IMR-90 (cell line): ENCODE measurements at regions of chr4 and their contacts with region 1.

Region 1: DNA sequence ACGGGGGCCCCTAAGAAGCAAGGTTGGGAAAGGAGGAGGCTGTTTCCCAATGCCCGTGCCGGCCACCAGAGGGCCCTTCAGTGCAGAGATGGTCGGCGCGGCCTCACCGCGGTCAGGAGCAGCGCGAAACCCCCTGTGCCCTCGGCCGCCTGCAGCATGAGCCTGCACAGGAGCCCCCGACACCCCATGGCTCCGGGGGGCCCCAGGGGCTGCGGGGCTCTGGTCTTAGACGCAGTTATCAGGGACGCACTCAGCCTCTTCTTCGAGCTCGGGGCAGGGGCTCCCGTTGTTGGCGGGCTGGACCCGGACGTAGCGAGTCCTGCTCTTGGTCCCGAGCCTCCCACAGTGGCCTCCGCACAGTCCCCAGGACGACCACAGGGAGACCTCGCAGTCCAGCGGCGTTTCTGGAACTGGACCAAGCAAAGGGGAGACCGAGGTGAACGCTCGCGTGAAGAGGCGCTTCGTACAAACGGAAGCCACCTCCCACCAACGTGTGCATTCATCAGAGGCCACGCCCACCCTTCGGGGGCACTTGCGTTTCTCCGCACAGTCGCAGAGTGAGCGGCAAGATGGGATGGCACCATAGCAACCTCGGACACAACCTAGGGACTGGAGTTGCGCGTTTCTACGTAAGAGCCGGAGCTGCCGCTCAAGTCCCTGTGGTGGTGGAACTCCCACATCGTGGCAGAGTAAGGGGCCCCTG is 5.0 kb downstream of the SPON2 start:
- DNase-seq: peak; percentile 79
- ATAC-seq: peak; percentile 96
- H3K4me3 ChIP-seq: peak overlapping the region; percentile 32
- H3K27ac ChIP-seq: peak overlapping the region; percentile 4
- H3K4me1 ChIP-seq: peaks cover 8% of the 10 kb centered on the region; the same call in 1 of the 2 replicates
- H3K27me3 ChIP-seq: no peaks in the 10 kb centered on the region
- CTCF ChIP-seq: peak; percentile 88
- POLR2A ChIP-seq: no peak
- RAD21 ChIP-seq: peak; percentile 87

Region 2: GRCh38 chr4:1099684-1100335 is 67.6 kb before region 1 on chr4:
- CTCF ChIA-PET with region 1: no interaction called
- POLR2A ChIA-PET with region 1: no interaction called
- dilution Hi-C with region 1: no loop called
- in situ Hi-C with region 1: no loop called
- intact Hi-C with region 1: no loop called
- DNase-seq: no peak
- ATAC-seq: no peak
- H3K4me3 ChIP-seq: no peak overlapping the region
- H3K27ac ChIP-seq: no peak overlapping the region
- H3K4me1 ChIP-seq: no peaks in the 10 kb centered on the region
- H3K27me3 ChIP-seq: peaks cover 26% of the 10 kb centered on the region
- CTCF ChIP-seq: no peak
- POLR2A ChIP-seq: no peak
- RAD21 ChIP-seq: no peak

Region 3: DNA sequence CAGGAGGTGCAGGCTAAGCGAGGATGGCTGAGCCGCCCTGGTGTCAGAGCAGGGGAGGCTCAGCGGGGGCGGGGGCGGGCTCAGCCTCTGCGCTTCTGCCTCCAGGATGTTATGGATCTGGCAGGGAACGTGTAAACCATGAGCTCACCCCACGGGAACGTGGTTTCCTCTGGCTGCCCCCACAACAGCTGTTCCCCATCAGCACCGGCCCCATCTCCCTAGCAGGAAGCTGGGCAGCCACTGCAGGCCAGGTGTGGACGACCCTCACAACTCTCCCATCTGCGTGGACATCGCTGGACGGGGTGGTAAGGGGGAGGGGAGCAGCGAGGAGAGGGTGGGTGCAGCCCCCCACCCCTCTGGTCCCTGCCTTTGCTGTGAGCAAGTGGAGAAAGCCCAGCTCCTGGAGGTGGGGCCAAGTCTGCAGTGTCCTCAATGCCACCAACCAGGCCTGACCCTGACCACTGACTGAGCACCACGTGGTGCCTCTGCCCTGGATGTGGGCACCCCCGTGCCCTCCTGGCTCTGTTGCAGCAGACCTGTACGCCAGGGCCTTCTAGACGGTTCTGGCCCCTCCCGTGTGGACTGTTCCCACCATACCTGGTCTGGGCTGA is 33.1 kb after region 1 on chr4:
- CTCF ChIA-PET with region 1: interaction called, 3 read pairs
- POLR2A ChIA-PET with region 1: interaction called, 10 read pairs
- dilution Hi-C with region 1: no loop called
- in situ Hi-C with region 1: no loop called
- intact Hi-C with region 1: loop called (anchors 5 kb)
- DNase-seq: peak; percentile 95
- ATAC-seq: peak; percentile 75
- H3K4me3 ChIP-seq: no peak overlapping the region
- H3K27ac ChIP-seq: peak overlapping the region; percentile 97
- H3K4me1 ChIP-seq: peaks cover 39% of the 10 kb centered on the region
- H3K27me3 ChIP-seq: no peaks in the 10 kb centered on the region
- CTCF ChIP-seq: no peak
- POLR2A ChIP-seq: no peak
- RAD21 ChIP-seq: no peak

Region 4: DNA sequence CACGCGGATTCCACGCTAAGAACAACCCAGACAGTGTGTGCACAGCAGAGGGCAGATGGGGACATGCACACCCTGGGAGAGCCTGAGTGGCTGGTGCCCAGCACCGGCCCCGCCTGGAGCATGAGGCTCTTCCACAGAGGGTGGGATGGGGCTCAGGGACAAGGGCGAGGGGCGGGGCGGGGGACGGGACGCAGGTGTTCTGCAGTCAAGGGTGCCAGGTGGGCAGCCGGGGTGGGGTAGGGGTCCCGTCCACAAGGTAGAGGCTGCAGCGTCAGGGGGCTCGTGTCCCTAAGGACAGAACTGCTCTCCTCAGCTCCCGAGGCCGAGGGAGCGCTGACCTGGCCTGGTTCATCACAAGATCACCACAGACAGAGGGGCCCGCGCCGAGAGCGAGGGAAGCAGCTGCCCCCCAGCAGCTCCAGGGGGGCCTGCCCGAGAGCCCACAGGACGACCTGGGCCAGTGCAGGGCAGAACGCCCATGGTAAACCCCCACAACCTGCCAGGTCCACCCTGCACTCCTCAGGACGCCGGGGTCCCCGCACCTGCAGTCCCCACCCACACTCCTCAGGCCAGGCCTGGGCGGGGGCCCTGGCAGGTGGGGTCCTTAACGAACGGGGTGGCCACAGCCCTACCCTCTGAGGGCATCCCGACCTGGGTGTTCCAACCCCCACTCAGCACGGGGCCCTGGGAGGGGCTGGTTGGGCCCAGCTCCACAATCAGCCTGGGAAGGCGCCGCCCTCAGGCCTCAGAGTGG is 54.8 kb after region 1 on chr4:
- CTCF ChIA-PET with region 1: no interaction called
- POLR2A ChIA-PET with region 1: no interaction called
- dilution Hi-C with region 1: no loop called
- in situ Hi-C with region 1: loop called (anchors 5 kb)
- intact Hi-C with region 1: no loop called
- DNase-seq: no peak
- ATAC-seq: no peak
- H3K4me3 ChIP-seq: no peak overlapping the region
- H3K27ac ChIP-seq: no peak overlapping the region
- H3K4me1 ChIP-seq: peaks cover 3% of the 10 kb centered on the region
- H3K27me3 ChIP-seq: no peaks in the 10 kb centered on the region
- CTCF ChIP-seq: no peak
- POLR2A ChIP-seq: no peak
- RAD21 ChIP-seq: no peak

Region 5: GRCh38 chr4:1249148-1249730 is 81.8 kb after region 1 on chr4:
- CTCF ChIA-PET with region 1: no interaction called
- POLR2A ChIA-PET with region 1: interaction called, 4 read pairs
- dilution Hi-C with region 1: no loop called
- in situ Hi-C with region 1: no loop called
- intact Hi-C with region 1: loop called (anchors 1 kb)
- DNase-seq: peak; percentile 86
- ATAC-seq: peak; percentile 82
- H3K4me3 ChIP-seq: peak overlapping the region; percentile 62
- H3K27ac ChIP-seq: peak overlapping the region; percentile 80
- H3K4me1 ChIP-seq: peaks cover 19% of the 10 kb centered on the region
- H3K27me3 ChIP-seq: no peaks in the 10 kb centered on the region
- CTCF ChIP-seq: no peak
- POLR2A ChIP-seq: peak; percentile 58; the same call in 1 of the 2 replicates
- RAD21 ChIP-seq: no peak

Region 6: GRCh38 chr4:1628892-1629698 is 461.7 kb after region 1 on chr4:
- CTCF ChIA-PET with region 1: no interaction called
- POLR2A ChIA-PET with region 1: no interaction called
- dilution Hi-C with region 1: no loop called
- in situ Hi-C with region 1: loop called (anchors 25 kb)
- intact Hi-C with region 1: no loop called
- DNase-seq: peak; percentile 6
- ATAC-seq: peak; percentile 99
- H3K4me3 ChIP-seq: no peak overlapping the region
- H3K27ac ChIP-seq: no peak overlapping the region
- H3K4me1 ChIP-seq: no peaks in the 10 kb centered on the region
- H3K27me3 ChIP-seq: no peaks in the 10 kb centered on the region; the same call in 1 of the 2 replicates
- CTCF ChIP-seq: peak; percentile 81
- POLR2A ChIP-seq: no peak
- RAD21 ChIP-seq: peak; percentile 77